ENCODE measurements at regions of chr3 and their contacts with region 1.

Region 1: DNA sequence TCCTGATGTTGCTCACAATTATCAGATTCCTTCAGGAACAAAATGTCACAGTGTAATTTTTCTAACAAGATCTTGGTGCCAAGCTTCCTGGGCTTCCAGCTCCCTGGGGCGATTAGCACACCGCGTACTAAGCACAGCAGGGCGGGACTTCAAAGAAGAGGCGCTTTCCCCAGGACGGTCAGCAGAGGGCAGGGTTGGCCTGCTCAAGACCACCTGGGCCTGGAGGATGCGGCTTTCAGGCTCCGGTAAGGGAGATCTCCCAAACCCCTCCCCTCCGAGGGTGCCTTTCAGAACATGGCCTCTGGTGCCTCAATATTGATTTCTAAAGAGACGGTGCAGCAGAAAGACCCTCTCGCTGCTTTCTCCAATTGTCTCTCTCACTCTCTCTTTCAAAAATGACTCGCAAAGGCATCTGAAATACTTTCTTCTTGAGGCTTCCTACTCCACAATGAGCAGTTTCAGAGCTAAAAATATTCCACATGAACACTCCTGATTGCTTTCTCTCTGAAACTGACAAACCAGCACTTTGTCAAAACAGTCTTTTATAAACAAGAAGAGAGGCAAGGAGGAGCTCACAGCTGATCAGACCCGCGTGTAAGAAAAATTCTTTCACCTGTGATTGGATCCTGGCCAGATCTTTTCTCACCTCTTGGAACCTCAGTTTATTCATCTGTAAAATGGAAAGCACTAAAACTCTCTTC is 154.0 kb downstream of the ADAMTS9 start:
- DNase-seq: peak; percentile 95
- H3K4me3 ChIP-seq: no peak overlapping the region
- H3K27ac ChIP-seq: no peak overlapping the region
- H3K4me1 ChIP-seq: peaks cover 14% of the 10 kb centered on the region
- H3K27me3 ChIP-seq: no peaks in the 10 kb centered on the region
- CTCF ChIP-seq: peak; percentile 73 to 89 (median 74)
- POLR2A ChIP-seq: no peak

Region 2: DNA sequence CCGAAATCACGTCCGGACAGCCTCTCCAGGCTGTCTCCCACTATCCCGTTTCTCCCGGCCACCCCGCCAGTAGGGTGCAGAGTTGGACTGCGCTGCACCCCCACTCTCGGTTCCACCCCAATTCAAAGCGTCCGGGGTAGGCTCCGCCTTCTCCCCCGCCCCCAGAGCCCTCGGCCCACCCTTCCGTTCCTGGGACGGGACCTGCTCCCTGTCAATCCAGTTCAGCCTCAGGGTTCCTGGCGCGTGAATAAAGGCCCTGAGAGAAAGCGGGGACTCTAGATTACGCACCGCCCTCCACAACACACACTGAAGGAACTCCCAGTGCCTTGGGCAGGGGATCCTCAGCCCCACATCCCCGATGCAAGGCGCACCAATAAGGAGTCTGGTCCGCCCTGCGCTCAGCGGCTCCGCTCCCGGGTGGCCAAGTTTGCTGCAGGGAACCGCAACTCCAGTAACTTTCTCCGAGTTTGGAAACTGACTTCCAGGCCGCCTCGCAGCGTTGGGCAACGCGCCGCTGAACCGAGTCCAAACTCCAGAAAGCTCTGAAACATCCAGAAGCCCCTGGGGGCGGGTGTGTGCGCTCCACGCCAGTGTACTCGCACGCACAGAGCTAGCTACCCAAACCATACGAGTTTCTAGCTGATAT is 152.2 kb after region 1 on chr3:
- intact Hi-C with region 1: loop called (anchors 10 kb)
- DNase-seq: peak; percentile 87
- H3K4me3 ChIP-seq: peak overlapping the region; percentile 68 to 69
- H3K27ac ChIP-seq: peak overlapping the region; percentile 89 to 94
- H3K4me1 ChIP-seq: peaks cover 3% of the 10 kb centered on the region
- H3K27me3 ChIP-seq: no peaks in the 10 kb centered on the region
- CTCF ChIP-seq: peak in 1 of 3 experiments; percentile 19
- POLR2A ChIP-seq: peak; percentile 3

Region 3: GRCh38 chr3:65245133-65246063 is 711.6 kb after region 1 on chr3:
- intact Hi-C with region 1: loop called (anchors 10 kb)
- DNase-seq: no peak
- H3K4me3 ChIP-seq: no peak overlapping the region
- H3K27ac ChIP-seq: no peak overlapping the region
- H3K4me1 ChIP-seq: no peaks in the 10 kb centered on the region
- H3K27me3 ChIP-seq: no peaks in the 10 kb centered on the region
- CTCF ChIP-seq: peak; percentile 29 to 54 (median 40)
- POLR2A ChIP-seq: no peak

Measured in testis (tissue), 5 donors.